MCF 10A (cell line): ENCODE measurements at regions of chr1 and their contacts with region 1.

Region 1: DNA sequence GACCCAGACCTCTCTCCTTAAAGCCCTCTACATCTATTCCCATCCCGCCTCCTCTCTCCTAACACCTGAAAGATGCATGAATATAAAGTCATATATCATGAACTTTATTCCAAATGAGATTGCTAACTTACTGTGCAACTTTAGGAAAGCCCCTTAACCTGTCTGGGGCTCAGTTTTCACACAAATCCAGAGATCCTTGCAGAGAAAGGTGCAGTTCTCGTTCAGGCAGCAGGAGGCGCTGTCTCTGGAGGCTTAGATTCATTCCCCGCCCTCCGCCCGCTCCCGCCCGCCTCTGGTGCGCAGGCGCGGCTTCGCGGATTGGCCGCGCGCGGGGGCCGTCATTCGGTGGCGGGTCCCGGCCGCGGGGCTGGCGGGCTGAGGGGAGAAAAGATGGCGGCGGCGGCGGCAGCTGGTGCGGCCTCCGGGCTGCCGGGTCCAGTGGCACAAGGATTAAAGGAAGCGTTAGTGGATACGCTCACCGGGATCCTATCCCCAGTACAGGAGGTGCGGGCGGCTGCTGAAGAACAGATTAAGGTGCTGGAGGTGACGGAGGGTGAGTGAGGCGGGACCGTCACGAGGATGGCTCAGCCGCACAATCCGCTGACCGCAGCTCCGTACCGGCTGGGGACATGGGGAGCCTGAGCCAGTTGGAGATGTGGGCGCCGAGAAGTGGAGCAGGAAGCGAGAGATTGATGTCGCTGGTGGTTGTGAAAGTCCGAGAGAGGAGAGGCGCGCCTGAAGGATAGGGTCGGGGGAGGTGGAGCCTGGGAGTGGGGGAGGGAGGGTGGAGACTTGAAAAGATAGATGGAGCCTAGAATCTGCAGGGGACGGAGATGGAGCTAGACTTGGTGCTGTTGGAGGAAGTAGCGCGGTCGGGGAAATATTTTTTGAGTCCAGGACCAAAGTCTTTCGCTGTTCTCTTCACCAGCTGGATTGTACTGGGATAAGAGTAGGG is at the start of gene IPO9:
- DNase-seq: peak; percentile 98
- H3K4me3 Mint-ChIP-seq: peak within 1 kb of the TSS; percentile 100
- H3K27ac Mint-ChIP-seq: peak within 1 kb of the TSS; percentile 94
- H3K4me1 Mint-ChIP-seq: peaks cover 46% of the 10 kb centered on the region
- H3K27me3 Mint-ChIP-seq: no peaks in the 10 kb centered on the region
- CTCF ChIP-seq: peak; percentile 100
- total RNA-seq, gene IPO9: 112 and 117 TPM in 2 replicates

Region 2: GRCh38 chr1:201505505-201505893 is 323.6 kb before region 1 on chr1:
- CTCF ChIA-PET with region 1: no interaction called
- POLR2A ChIA-PET with region 1: no interaction called
- intact Hi-C with region 1: no loop called
- DNase-seq: peak; percentile 87
- H3K4me3 Mint-ChIP-seq: peak overlapping the region; percentile 79
- H3K27ac Mint-ChIP-seq: peak overlapping the region; percentile 86
- H3K4me1 Mint-ChIP-seq: peaks cover 65% of the 10 kb centered on the region
- H3K27me3 Mint-ChIP-seq: no peaks in the 10 kb centered on the region
- CTCF ChIP-seq: no peak

Region 3: DNA sequence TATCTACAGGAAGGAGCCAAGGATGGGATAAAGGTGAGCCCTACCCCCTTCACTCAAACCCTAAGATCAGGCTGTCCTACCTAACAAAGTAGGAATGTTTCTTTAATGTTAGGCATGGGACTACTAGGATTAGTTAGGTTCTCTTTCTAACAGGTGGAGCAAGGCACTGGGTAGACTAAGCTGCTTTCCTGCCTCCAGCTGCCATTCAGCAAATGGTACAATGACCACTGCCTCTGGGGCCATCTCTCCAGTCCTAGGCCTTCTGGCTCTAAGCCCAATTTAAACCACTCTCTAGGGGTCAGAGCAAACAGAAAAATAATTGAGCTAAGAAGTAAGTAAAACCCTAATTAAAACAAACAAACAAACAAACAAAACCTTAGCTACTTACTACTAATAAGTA is 15.9 kb before region 1 on chr1:
- CTCF ChIA-PET with region 1: interaction called, 15 read pairs
- POLR2A ChIA-PET with region 1: interaction called, 9 read pairs
- intact Hi-C with region 1: no loop called
- DNase-seq: no peak
- H3K4me3 Mint-ChIP-seq: no peak overlapping the region
- H3K27ac Mint-ChIP-seq: no peak overlapping the region
- H3K4me1 Mint-ChIP-seq: no peaks in the 10 kb centered on the region
- H3K27me3 Mint-ChIP-seq: no peaks in the 10 kb centered on the region
- CTCF ChIP-seq: no peak

Region 4: GRCh38 chr1:201842472-201843027 is 13.5 kb after region 1 on chr1:
- CTCF ChIA-PET with region 1: interaction called, 96 read pairs
- POLR2A ChIA-PET with region 1: interaction called, 78 read pairs
- intact Hi-C with region 1: no loop called
- DNase-seq: no peak
- H3K4me3 Mint-ChIP-seq: no peak overlapping the region
- H3K27ac Mint-ChIP-seq: peak overlapping the region; percentile 11
- H3K4me1 Mint-ChIP-seq: peaks cover 41% of the 10 kb centered on the region
- H3K27me3 Mint-ChIP-seq: no peaks in the 10 kb centered on the region
- CTCF ChIP-seq: no peak

Region 5: DNA sequence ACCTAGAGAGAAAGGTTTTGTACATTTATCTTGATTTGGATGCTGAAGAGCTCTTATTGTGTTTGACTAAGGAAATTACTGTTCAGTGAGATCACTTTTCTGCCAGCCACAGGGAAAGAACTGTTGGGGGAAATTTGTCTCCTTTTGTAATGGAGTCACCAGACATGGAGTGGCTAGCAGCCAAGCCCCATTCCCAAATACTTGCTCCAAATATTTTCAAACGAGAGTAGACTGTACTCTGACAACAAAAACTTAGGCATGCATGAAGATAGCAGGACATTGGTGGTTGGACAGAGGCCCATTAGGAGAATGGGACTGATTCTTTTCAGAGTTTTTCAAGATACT is 20.9 kb after region 1 on chr1:
- CTCF ChIA-PET with region 1: interaction called, 27 read pairs
- POLR2A ChIA-PET with region 1: interaction called, 78 read pairs
- intact Hi-C with region 1: no loop called
- DNase-seq: peak; percentile 51
- H3K4me3 Mint-ChIP-seq: no peak overlapping the region
- H3K27ac Mint-ChIP-seq: peak overlapping the region; percentile 58
- H3K4me1 Mint-ChIP-seq: peaks cover 41% of the 10 kb centered on the region
- H3K27me3 Mint-ChIP-seq: no peaks in the 10 kb centered on the region
- CTCF ChIP-seq: no peak